PC-9 (cell line): ENCODE measurements at regions of chr3 and their contacts with region 1.

Region 1: GRCh38 chr3:141738022-141738890 is at the start of gene RNF7:
- DNase-seq: peak; percentile 85 to 98
- H3K4me3 ChIP-seq: peak within 1 kb of the TSS; percentile 94
- H3K27ac ChIP-seq: peak within 1 kb of the TSS; percentile 84
- H3K4me1 ChIP-seq: peaks cover 20% of the 10 kb centered on the region
- H3K27me3 ChIP-seq: no peaks in the 10 kb centered on the region
- CTCF ChIP-seq: peak; percentile 82
- total RNA-seq, gene RNF7: 82.2 and 89.1 TPM in 2 replicates

Region 2: DNA sequence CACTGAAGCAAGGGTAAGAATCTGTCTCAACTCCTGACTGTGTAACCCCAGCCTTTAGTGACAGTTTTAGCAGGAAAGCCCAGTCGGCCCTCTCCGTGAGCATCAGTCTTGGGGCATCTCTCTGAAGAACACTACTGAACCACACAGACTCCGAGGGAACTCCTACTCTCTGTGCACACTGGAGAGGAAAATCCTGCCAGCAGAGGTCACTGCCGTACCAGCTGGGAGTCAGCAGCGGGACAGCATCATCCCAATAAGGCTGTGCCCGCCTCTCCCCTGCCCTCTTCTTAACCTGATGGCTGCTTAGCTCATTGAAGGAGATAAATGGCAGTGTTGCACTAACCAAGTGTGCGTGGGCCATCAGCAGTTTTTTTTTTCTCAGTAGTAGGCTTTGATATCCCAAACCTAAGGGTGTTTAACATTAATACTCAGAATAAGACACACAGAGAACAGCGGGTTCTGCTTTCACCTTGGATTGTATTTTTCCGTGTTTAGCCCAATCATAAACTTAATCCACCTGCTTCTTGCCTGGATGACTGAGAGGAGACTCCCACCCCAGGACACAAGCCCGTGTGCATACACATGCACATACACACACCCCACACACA is 278.1 kb before region 1 on chr3:
- CTCF ChIA-PET with region 1: no interaction called
- POLR2A ChIA-PET with region 1: no interaction called
- intact Hi-C with region 1: loop called (anchors 1 kb)
- DNase-seq: peak; percentile 57 to 86
- H3K4me3 ChIP-seq: no peak overlapping the region
- H3K27ac ChIP-seq: no peak overlapping the region
- H3K4me1 ChIP-seq: peaks cover 13% of the 10 kb centered on the region
- H3K27me3 ChIP-seq: no peaks in the 10 kb centered on the region
- CTCF ChIP-seq: peak; percentile 83

Region 3: GRCh38 chr3:141644931-141645330 is 93.3 kb before region 1 on chr3:
- CTCF ChIA-PET with region 1: no interaction called
- POLR2A ChIA-PET with region 1: no interaction called
- intact Hi-C with region 1: loop called (anchors 5 kb)
- DNase-seq: peak; percentile 37 to 55
- H3K4me3 ChIP-seq: no peak overlapping the region
- H3K27ac ChIP-seq: no peak overlapping the region
- H3K4me1 ChIP-seq: no peaks in the 10 kb centered on the region
- H3K27me3 ChIP-seq: no peaks in the 10 kb centered on the region
- CTCF ChIP-seq: peak; percentile 76

Region 4: GRCh38 chr3:141686466-141687291 is 51.6 kb before region 1 on chr3:
- CTCF ChIA-PET with region 1: no interaction called
- POLR2A ChIA-PET with region 1: no interaction called
- intact Hi-C with region 1: no loop called
- DNase-seq: peak in 1 of 2 experiments; percentile 13
- H3K4me3 ChIP-seq: no peak overlapping the region; the same call in 1 of the 2 replicates
- H3K27ac ChIP-seq: no peak overlapping the region
- H3K4me1 ChIP-seq: no peaks in the 10 kb centered on the region
- H3K27me3 ChIP-seq: no peaks in the 10 kb centered on the region
- CTCF ChIP-seq: no peak

Region 5: GRCh38 chr3:141699897-141700296 is 38.4 kb before region 1 on chr3:
- CTCF ChIA-PET with region 1: no interaction called
- POLR2A ChIA-PET with region 1: no interaction called
- intact Hi-C with region 1: no loop called
- DNase-seq: no peak
- H3K4me3 ChIP-seq: no peak overlapping the region
- H3K27ac ChIP-seq: no peak overlapping the region
- H3K4me1 ChIP-seq: no peaks in the 10 kb centered on the region
- H3K27me3 ChIP-seq: peaks cover 62% of the 10 kb centered on the region
- CTCF ChIP-seq: no peak

Region 6: GRCh38 chr3:141828487-141829268 is 90.4 kb after region 1 on chr3:
- CTCF ChIA-PET with region 1: no interaction called
- POLR2A ChIA-PET with region 1: no interaction called
- intact Hi-C with region 1: no loop called
- DNase-seq: peak; percentile 48 to 65
- H3K4me3 ChIP-seq: no peak overlapping the region
- H3K27ac ChIP-seq: no peak overlapping the region
- H3K4me1 ChIP-seq: peaks cover 17% of the 10 kb centered on the region
- H3K27me3 ChIP-seq: no peaks in the 10 kb centered on the region
- CTCF ChIP-seq: no peak

Region 7: DNA sequence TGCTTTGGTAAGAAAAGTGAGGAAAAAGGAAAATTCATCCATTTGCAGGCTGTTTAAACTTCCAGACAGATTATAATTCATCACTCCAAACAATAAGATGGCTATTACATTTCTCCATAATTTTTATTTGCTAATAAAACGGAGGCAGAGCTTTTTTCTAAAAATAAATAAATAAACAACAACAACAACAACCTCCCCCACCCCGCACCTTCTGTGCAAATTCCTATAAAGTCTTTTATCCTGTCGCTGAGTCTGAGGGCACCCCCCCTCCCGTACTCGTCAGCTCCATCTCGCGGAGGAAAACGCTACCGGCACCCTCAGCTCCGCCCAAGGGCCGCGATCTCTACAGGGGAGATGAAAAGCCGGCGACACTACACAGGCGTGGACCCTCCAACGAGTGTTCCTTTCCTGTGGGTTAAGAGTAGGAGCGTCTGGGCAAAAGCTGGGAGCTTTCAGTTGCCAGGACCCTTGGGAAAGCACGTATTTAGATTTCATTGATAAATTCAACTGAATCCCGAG is 137.2 kb after region 1 on chr3:
- CTCF ChIA-PET with region 1: interaction called, 10 read pairs
- POLR2A ChIA-PET with region 1: interaction called, 8 read pairs
- intact Hi-C with region 1: loop called (anchors 1 kb)
- DNase-seq: peak; percentile 61 to 85
- H3K4me3 ChIP-seq: peak overlapping the region; percentile 92
- H3K27ac ChIP-seq: 0 out of 2 replicates have a peak overlapping the region, but pooled peaks have one; percentile 0
- H3K4me1 ChIP-seq: peaks cover 20% of the 10 kb centered on the region
- H3K27me3 ChIP-seq: no peaks in the 10 kb centered on the region
- CTCF ChIP-seq: peak; percentile 78

Region 8: GRCh38 chr3:142028243-142028777 is 290.1 kb after region 1 on chr3:
- CTCF ChIA-PET with region 1: no interaction called
- POLR2A ChIA-PET with region 1: no interaction called
- intact Hi-C with region 1: loop called (anchors 2 kb)
- DNase-seq: peak in 1 of 2 experiments; percentile 35
- H3K4me3 ChIP-seq: peak overlapping the region; percentile 39; the same call in 1 of the 2 replicates
- H3K27ac ChIP-seq: no peak overlapping the region
- H3K4me1 ChIP-seq: no peaks in the 10 kb centered on the region
- H3K27me3 ChIP-seq: no peaks in the 10 kb centered on the region
- CTCF ChIP-seq: no peak

Region 9: GRCh38 chr3:142226484-142226883 is 488.2 kb after region 1 on chr3:
- CTCF ChIA-PET with region 1: interaction called, 7 read pairs
- POLR2A ChIA-PET with region 1: no interaction called
- intact Hi-C with region 1: loop called (anchors 1 kb)
- DNase-seq: no peak
- H3K4me3 ChIP-seq: no peak overlapping the region
- H3K27ac ChIP-seq: no peak overlapping the region
- H3K4me1 ChIP-seq: peaks cover 10% of the 10 kb centered on the region
- H3K27me3 ChIP-seq: no peaks in the 10 kb centered on the region
- CTCF ChIP-seq: no peak; the same call in 1 of the 2 replicates